ENCODE measurements at regions of chr20 and their contacts with region 1.

Region 1: DNA sequence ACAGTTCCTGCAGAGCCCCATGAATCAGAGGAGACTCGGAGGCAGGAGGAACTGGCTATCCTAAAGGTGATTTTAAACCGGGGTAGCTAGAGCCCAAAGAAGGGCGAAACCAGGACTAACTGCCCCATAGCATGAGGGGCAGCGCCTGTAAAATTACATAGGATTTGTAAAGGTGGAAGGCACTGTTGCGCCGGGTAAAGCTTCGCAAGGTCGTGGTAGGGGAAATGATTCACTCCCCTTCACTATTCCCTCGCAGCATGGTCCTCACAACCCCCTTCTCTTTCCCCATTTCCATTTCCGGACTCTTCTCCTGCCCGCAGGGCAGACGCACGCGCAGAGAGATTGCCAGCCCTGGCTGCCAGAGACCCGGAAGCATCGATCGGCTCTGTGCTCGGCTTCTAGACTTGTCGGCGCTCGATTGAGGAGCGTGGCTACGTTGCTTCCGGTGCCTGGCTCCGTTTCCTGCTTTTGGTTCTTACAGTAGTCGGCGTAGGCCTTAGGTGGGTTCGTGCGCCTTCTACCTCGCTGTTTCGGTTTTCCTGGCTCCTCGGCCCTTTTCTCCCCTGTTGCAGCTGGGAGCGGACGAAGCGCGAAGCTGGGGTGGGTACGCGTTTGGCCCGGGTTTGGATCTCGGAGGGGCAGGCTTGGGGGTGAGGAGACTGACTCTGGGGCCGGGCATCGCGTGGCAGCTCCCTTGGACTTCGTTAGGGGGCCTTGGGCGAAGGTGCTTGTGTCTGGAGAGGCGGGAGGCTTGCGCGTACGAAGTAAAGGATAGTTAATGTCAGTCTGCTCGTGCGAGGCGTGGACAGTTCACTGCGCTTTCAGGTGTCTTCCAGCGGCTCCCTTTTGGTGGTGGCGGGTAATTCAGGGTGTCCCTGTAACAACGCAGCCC is at the start of gene SNRPB2:
- DNase-seq: peak; percentile 97
- ATAC-seq: peak; percentile 97
- H3K4me3 ChIP-seq: peak within 1 kb of the TSS; percentile 54 to 86
- H3K27ac ChIP-seq: peak within 1 kb of the TSS in 1 of 2 donors; percentile 85
- H3K4me1 ChIP-seq: peaks cover 0 to 2% of the 10 kb centered on the region in 2 donors
- H3K27me3 ChIP-seq: no peaks in the 10 kb centered on the region
- total RNA-seq, gene SNRPB2: 36.0 to 39.4 TPM

Region 2: GRCh38 chr20:16573001-16573965 is 156.5 kb before region 1 on chr20 and contains the start of gene KIF16B:
- intact Hi-C with region 1: loop called (anchors 5 to 10 kb)
- DNase-seq: peak; percentile 95 to 97
- ATAC-seq: peak; percentile 97
- H3K4me3 ChIP-seq: peak within 1 kb of the TSS; percentile 96 to 98
- H3K27ac ChIP-seq: no peak within 1 kb of the TSS
- H3K4me1 ChIP-seq: no peaks in the 10 kb centered on the region
- H3K27me3 ChIP-seq: no peaks in the 10 kb centered on the region
- total RNA-seq, gene KIF16B: 17.3 to 20.6 TPM

Measured in aorta (tissue), 5 donors.